Natural killer cell (primary cell): ENCODE measurements at regions of chr11 and their contacts with region 1.

Region 1: GRCh38 chr11:85752890-85753581 is 57.9 kb downstream of the SYTL2 start:
- DNase-seq: peak; percentile 79 to 98
- ATAC-seq: peak; percentile 72 to 90 (median 87)
- H3K4me3 ChIP-seq: no peak overlapping the region
- H3K4me3 Mint-ChIP-seq: peak overlapping the region; percentile 92
- H3K27ac ChIP-seq: peak overlapping the region; percentile 96
- H3K27ac Mint-ChIP-seq: peak overlapping the region; percentile 98 to 100
- H3K4me1 ChIP-seq: peaks cover 74% of the 10 kb centered on the region
- H3K4me1 Mint-ChIP-seq: peaks cover 89% of the 10 kb centered on the region in 2 donors
- H3K27me3 ChIP-seq: no peaks in the 10 kb centered on the region
- H3K27me3 Mint-ChIP-seq: no peaks in the 10 kb centered on the region
- CTCF ChIP-seq: no peak

Region 2: GRCh38 chr11:85647604-85648299 is 105.3 kb before region 1 on chr11 and contains the start of gene TMEM126A:
- intact Hi-C with region 1: loop called (anchors 5 kb)
- DNase-seq: peak; percentile 86 to 94
- ATAC-seq: peak; percentile 99 to 100 (median 99)
- H3K4me3 ChIP-seq: peak within 1 kb of the TSS; percentile 79
- H3K4me3 Mint-ChIP-seq: peak within 1 kb of the TSS; percentile 100
- H3K27ac ChIP-seq: peak within 1 kb of the TSS; percentile 68
- H3K27ac Mint-ChIP-seq: peak within 1 kb of the TSS; percentile 94 to 98
- H3K4me1 ChIP-seq: peaks cover 8% of the 10 kb centered on the region
- H3K4me1 Mint-ChIP-seq: peaks cover 27 to 28% of the 10 kb centered on the region in 2 donors
- H3K27me3 ChIP-seq: peaks cover 10% of the 10 kb centered on the region
- H3K27me3 Mint-ChIP-seq: peaks cover 25 to 31% of the 10 kb centered on the region in 2 donors
- CTCF ChIP-seq: no peak
- total RNA-seq, gene TMEM126A: 16.8 to 27.6 (median 23.2) TPM

Region 3: GRCh38 chr11:85682330-85683305 is 70.4 kb before region 1 on chr11:
- intact Hi-C with region 1: no loop called
- DNase-seq: peak; percentile 49 to 75
- ATAC-seq: peak; percentile 71 to 87 (median 78)
- H3K4me3 ChIP-seq: peak overlapping the region; percentile 74
- H3K4me3 Mint-ChIP-seq: peak overlapping the region; percentile 85
- H3K27ac ChIP-seq: peak overlapping the region; percentile 54
- H3K27ac Mint-ChIP-seq: peak overlapping the region; percentile 65 to 78
- H3K4me1 ChIP-seq: peaks cover 5% of the 10 kb centered on the region
- H3K4me1 Mint-ChIP-seq: peaks cover 26 to 31% of the 10 kb centered on the region in 2 donors
- H3K27me3 ChIP-seq: no peaks in the 10 kb centered on the region
- H3K27me3 Mint-ChIP-seq: no peaks in the 10 kb centered on the region
- CTCF ChIP-seq: no peak

Region 4: DNA sequence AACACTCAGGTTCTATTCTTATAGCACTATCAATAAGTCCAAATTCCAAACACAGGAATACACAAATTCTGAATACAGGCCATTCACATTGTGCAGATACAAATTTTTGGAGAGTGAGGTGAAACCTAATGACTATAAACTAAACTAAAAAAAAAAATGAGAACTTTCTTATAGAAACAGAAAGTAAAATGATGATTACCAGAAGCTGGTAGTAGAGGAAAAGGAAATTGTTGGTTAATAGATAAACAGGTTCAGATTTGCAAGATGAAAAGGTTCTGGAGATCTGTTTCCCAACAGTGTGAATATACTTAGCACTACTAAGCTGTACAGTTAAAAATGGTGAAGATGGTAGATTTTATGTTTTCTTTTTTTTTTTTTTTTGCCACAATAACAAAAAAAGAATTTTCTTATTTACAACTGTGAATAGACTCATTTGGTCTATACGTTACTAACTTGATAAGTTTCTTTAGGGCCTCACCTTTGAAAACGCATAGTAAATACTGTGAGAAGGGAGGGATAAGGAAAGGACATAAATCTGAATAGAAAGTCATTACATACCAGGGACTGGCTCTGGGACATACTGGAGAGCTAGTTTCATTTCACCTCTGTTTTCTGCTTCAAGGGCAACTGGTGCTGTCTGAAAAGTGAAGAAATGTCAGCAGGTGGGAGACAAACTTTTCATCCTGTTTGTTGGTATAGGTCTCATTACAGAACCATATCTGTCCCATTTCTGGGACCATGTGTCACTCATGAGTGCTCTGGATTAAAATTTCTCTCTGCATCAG is 52.9 kb before region 1 on chr11:
- intact Hi-C with region 1: loop called (anchors 5 kb)
- DNase-seq: peak in 1 of 2 donors; percentile 37
- ATAC-seq: peak; percentile 61 to 82 (median 70)
- H3K4me3 ChIP-seq: no peak overlapping the region
- H3K4me3 Mint-ChIP-seq: peak overlapping the region; percentile 83
- H3K27ac ChIP-seq: peak overlapping the region; percentile 75
- H3K27ac Mint-ChIP-seq: peak overlapping the region; percentile 88 to 92
- H3K4me1 ChIP-seq: peaks cover 8% of the 10 kb centered on the region
- H3K4me1 Mint-ChIP-seq: peaks cover 16 to 27% of the 10 kb centered on the region in 2 donors
- H3K27me3 ChIP-seq: no peaks in the 10 kb centered on the region
- H3K27me3 Mint-ChIP-seq: no peaks in the 10 kb centered on the region
- CTCF ChIP-seq: no peak

Region 5: GRCh38 chr11:85810871-85811611 is 58.0 kb after region 1 on chr11 and contains the start of gene SYTL2:
- intact Hi-C with region 1: loop called (anchors 1 kb)
- DNase-seq: peak; percentile 79 to 87
- ATAC-seq: peak; percentile 87 to 97 (median 95)
- H3K4me3 ChIP-seq: peak within 1 kb of the TSS; percentile 61
- H3K4me3 Mint-ChIP-seq: peak within 1 kb of the TSS; percentile 96
- H3K27ac ChIP-seq: peak within 1 kb of the TSS; percentile 49
- H3K27ac Mint-ChIP-seq: peak within 1 kb of the TSS; percentile 91 to 95
- H3K4me1 ChIP-seq: peaks cover 30% of the 10 kb centered on the region
- H3K4me1 Mint-ChIP-seq: peaks cover 37 to 38% of the 10 kb centered on the region in 2 donors
- H3K27me3 ChIP-seq: no peaks in the 10 kb centered on the region
- H3K27me3 Mint-ChIP-seq: peaks cover 0 to 3% of the 10 kb centered on the region in 2 donors
- CTCF ChIP-seq: no peak
- total RNA-seq, gene SYTL2: 116 to 237 (median 143) TPM

Region 6: GRCh38 chr11:86486261-86487028 is 733.4 kb after region 1 on chr11:
- intact Hi-C with region 1: loop called (anchors 2 kb)
- DNase-seq: peak; percentile 66 to 70
- ATAC-seq: peak; percentile 93 to 98 (median 94)
- H3K4me3 ChIP-seq: no peak overlapping the region
- H3K4me3 Mint-ChIP-seq: peak overlapping the region; percentile 82
- H3K27ac ChIP-seq: peak overlapping the region; percentile 74
- H3K27ac Mint-ChIP-seq: peak overlapping the region; percentile 85 to 90
- H3K4me1 ChIP-seq: peaks cover 34% of the 10 kb centered on the region
- H3K4me1 Mint-ChIP-seq: peaks cover 49 to 65% of the 10 kb centered on the region in 2 donors
- H3K27me3 ChIP-seq: no peaks in the 10 kb centered on the region
- H3K27me3 Mint-ChIP-seq: peaks cover 42 to 45% of the 10 kb centered on the region in 2 donors
- CTCF ChIP-seq: no peak